ENCODE measurements at regions of chr12 and their contacts with region 1.

Region 1: GRCh38 chr12:67111182-67111581 is 158.0 kb upstream of the CAND1 start:
- DNase-seq: no peak
- H3K4me3 ChIP-seq: no peak overlapping the region
- CTCF ChIP-seq: no peak

Region 2: GRCh38 chr12:67002720-67003119 is 108.5 kb before region 1 on chr12:
- in situ Hi-C with region 1: no loop called
- DNase-seq: no peak
- H3K4me3 ChIP-seq: no peak overlapping the region
- CTCF ChIP-seq: no peak

Region 3: GRCh38 chr12:67052981-67053380 is 58.2 kb before region 1 on chr12:
- in situ Hi-C with region 1: loop called (anchors 5 kb)
- DNase-seq: no peak
- H3K4me3 ChIP-seq: no peak overlapping the region
- CTCF ChIP-seq: no peak

Region 4: DNA sequence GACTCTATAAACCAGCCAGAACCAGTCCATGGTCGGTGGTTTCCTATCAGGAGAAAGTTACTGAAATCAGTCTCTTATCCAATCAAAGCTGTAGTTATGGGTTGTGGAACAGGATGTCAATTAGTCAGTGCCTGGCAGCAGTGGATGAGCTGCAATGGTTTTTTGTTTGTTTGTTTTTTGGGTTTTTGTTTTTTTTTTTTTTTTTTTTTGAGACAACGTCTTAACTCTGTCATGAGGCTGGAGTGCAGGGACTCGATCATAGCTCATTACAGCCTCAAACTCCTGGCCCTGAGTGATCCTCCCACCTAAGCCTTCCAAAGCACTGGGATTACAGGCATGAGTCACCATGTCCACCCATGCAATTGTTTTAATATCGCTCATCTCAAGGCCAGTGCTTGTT is 44.7 kb after region 1 on chr12:
- in situ Hi-C with region 1: no loop called
- DNase-seq: no peak
- H3K4me3 ChIP-seq: no peak overlapping the region
- CTCF ChIP-seq: no peak

Region 5: DNA sequence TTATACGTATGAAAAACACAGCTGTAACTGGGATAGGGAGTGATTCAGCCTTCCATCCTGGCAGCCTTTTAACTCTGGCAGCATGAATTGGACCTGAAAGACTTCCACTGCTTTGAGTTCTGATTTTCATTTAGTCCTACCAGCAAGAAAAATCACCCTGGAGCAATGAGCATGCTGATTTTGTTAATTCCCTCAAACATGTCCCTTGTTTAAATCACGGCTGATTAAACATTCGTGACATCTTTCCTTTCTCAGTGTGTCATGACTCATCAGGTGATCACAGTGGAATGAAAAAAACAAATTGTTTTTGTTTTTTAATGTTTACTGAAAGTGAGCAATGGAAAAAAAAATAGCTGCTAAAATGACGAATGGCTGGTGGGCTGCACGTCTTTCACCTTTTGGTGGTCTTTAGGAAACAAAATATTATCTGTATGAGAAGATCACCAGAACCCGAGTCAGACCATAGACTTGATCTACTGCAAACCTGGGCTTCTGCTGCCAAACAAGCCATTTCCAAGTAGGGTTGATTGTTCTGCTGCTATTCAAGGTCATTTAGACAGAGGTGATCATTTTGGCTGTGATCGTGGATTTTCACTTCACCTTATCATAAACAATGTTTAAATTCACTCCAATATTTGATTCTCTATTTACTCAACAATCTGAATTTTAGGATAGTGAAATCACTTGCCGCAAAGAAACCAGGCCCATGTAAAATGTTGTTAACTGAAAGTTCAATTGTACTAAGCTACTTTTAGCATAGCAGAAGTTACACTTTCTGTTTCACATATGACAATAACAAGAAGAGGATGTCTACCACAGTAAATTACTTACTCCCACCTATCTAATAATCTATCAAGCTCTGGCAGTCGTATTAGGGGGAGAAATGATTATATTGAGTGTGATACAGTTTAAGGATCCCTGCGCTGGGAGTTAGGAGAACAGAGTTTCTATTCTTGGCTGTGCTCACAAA is 91.1 kb after region 1 on chr12:
- in situ Hi-C with region 1: loop called (anchors 5 kb)
- DNase-seq: no peak
- H3K4me3 ChIP-seq: no peak overlapping the region
- CTCF ChIP-seq: no peak

Measured in astrocyte of the cerebellum (primary cell).